Activated CD4-positive, alpha-beta T cell treated with anti-CD3 and anti-CD28 coated beads for 36 hours (primary cell): ENCODE measurements at regions of chr12 and their contacts with region 1.

Region 1: DNA sequence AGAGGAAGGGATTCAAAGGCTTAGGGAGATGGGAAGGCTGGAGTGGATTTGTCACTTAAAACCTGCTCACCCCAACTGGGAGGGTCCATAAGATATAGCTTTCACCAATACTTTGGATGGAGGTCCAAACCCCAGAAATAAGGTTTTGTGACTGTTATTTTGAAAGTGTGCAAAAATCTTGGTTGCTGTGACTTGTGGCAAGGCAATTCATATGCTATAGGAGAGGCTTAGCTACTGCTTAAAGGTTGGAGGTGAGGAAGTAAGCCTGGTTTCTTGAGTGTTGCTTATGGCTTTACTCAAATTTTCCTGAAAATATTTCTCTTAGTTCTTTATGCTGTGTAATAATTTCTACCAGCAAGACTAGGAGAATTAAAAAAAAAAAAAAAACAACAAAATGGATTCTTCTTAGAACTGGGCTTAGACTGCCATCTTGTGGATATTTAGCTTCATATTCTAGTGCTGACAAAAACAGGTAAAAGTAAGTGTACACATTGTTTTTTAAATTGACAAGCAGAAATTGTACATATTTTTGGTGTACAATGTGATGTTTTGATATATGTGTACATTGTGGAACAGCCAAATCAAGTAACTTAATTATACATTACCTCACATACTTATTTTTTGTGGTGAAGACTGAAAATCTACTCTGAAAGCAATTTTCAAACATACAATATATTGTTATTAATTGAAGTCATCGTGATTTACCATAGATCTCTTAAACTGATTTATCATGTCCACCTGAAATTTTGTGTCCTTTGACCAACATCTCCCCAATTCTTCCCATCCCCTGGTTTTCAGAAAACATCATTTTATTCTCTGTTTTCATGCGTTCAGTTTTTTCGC is 23.0 kb downstream of the PDE6H start:
- DNase-seq: no peak
- ATAC-seq: peak; percentile 45
- H3K4me3 Mint-ChIP-seq: no peak overlapping the region
- H3K27ac Mint-ChIP-seq: peak overlapping the region; percentile 76
- H3K4me1 Mint-ChIP-seq: peaks cover 29% of the 10 kb centered on the region
- H3K27me3 Mint-ChIP-seq: no peaks in the 10 kb centered on the region

Region 2: DNA sequence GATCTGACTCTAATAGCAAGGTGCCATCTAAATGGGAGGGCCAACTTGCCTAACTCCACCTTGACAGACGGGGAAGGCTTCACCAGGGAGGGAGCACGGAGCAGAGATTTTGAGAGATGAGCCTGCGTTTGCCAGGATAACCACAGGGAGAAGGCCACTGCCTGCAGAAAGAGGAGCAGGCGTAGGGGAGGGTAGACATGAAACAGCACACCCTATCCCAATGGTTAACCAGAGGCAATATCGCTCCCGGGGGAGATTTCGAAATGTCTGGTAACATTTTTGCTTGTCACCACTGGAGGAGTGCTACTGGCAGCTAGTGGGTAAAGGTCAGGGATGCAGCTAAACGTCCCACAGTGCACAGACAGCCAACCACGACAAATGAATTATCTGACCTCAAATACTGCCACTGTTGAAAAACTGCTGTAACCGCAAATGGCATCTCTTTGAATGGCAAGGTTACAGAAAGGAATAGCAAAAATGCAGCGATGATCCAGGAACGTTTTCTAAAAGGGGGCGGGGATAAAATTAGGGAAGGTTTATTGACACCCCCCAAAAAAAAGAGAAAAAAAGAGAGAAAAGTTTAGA is 756.4 kb before region 1 on chr12:
- CTCF ChIA-PET with region 1: interaction called, 3 read pairs
- POLR2A ChIA-PET with region 1: no interaction called
- intact Hi-C with region 1: loop called in 1 of 2 experiments (anchors 5 kb)
- DNase-seq: peak; percentile 63
- ATAC-seq: peak; percentile 86
- H3K4me3 Mint-ChIP-seq: peak overlapping the region; percentile 62
- H3K27ac Mint-ChIP-seq: peak overlapping the region; percentile 89
- H3K4me1 Mint-ChIP-seq: peaks cover 20% of the 10 kb centered on the region
- H3K27me3 Mint-ChIP-seq: no peaks in the 10 kb centered on the region

Region 3: DNA sequence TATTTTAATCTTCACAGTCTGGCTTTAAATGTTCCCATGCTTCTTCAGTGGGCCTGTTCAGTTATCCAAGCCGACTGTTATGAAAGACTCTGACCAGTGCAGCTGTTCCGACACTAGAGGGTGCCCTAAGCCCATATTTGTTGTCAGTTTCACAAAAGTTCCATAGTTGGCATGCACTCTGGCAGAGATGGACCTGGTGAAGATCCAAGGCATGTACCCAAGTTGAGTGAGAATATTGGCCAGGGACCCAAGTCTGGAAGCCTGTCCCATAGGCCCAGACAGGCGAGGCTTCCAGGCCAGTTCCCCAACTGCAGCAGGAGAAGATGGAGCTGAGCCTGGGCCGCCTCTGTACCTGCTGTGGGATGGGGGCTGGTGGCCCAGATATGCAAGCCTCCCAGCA is 272.0 kb before region 1 on chr12:
- CTCF ChIA-PET with region 1: interaction called, 21 read pairs
- POLR2A ChIA-PET with region 1: no interaction called
- intact Hi-C with region 1: loop called (anchors 1 kb)
- DNase-seq: peak; percentile 72
- ATAC-seq: peak; percentile 80
- H3K4me3 Mint-ChIP-seq: no peak overlapping the region
- H3K27ac Mint-ChIP-seq: no peak overlapping the region
- H3K4me1 Mint-ChIP-seq: no peaks in the 10 kb centered on the region
- H3K27me3 Mint-ChIP-seq: peaks cover 5% of the 10 kb centered on the region

Region 4: DNA sequence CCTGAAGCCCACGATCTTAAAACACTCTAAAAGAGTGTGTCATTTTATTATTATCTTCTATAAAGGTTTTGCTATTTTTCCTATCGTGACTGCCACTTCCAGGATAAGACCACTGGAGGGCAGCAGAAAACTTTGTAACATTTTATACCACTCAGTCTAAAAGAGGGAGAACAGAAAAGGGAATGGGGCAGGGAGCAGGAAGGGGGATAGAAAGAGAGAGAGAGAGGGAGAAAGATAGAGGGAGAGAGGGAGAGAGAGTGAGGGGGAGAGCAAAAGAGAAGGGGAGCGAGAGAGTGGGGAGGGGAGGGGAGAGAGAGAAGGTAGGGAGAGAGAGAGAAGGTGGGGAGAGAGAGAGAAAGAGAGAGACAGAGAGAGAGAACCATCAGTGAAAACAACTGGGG is 150.5 kb before region 1 on chr12:
- CTCF ChIA-PET with region 1: interaction called, 85 read pairs
- POLR2A ChIA-PET with region 1: no interaction called
- intact Hi-C with region 1: loop called (anchors 1 kb)
- DNase-seq: peak; percentile 46
- ATAC-seq: peak; percentile 58
- H3K4me3 Mint-ChIP-seq: no peak overlapping the region
- H3K27ac Mint-ChIP-seq: no peak overlapping the region
- H3K4me1 Mint-ChIP-seq: peaks cover 11% of the 10 kb centered on the region
- H3K27me3 Mint-ChIP-seq: no peaks in the 10 kb centered on the region

Region 5: DNA sequence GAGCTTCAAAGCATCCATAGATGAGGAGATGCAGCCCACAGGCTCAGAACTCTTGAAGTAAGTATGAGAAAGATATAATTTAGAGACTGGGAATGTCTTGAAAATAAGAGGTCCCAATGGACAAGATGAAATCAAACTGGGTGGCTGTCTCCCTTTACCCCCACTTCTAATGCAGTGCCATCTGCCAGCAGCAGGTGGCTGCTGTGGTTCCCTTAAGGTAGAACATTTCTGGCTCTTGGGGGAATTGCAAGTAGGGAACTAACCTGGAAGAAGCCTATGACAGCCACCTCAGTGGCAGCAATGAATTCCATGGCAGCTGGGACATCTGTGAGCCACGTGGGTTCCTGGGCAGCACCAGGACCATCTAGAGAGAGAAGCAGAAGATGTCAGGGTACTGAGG is 58.1 kb before region 1 on chr12:
- CTCF ChIA-PET with region 1: interaction called, 20 read pairs
- POLR2A ChIA-PET with region 1: interaction called, 3 read pairs
- intact Hi-C with region 1: loop called (anchors 2 to 5 kb)
- DNase-seq: peak; percentile 42
- ATAC-seq: peak; percentile 31
- H3K4me3 Mint-ChIP-seq: no peak overlapping the region
- H3K27ac Mint-ChIP-seq: peak overlapping the region; percentile 44
- H3K4me1 Mint-ChIP-seq: peaks cover 30% of the 10 kb centered on the region
- H3K27me3 Mint-ChIP-seq: no peaks in the 10 kb centered on the region

Region 6: GRCh38 chr12:14960548-14961465 is 35.0 kb before region 1 on chr12:
- CTCF ChIA-PET with region 1: interaction called, 6 read pairs
- POLR2A ChIA-PET with region 1: no interaction called
- intact Hi-C with region 1: loop called (anchors 2 kb)
- DNase-seq: peak; percentile 56
- ATAC-seq: peak; percentile 53
- H3K4me3 Mint-ChIP-seq: peak overlapping the region; percentile 96
- H3K27ac Mint-ChIP-seq: peak overlapping the region; percentile 99
- H3K4me1 Mint-ChIP-seq: peaks cover 55% of the 10 kb centered on the region
- H3K27me3 Mint-ChIP-seq: no peaks in the 10 kb centered on the region

Region 7: GRCh38 chr12:14981049-14981448 is 14.8 kb before region 1 on chr12:
- CTCF ChIA-PET with region 1: interaction called, 12 read pairs
- POLR2A ChIA-PET with region 1: no interaction called
- intact Hi-C with region 1: no loop called
- DNase-seq: no peak
- ATAC-seq: no peak
- H3K4me3 Mint-ChIP-seq: no peak overlapping the region
- H3K27ac Mint-ChIP-seq: no peak overlapping the region
- H3K4me1 Mint-ChIP-seq: peaks cover 63% of the 10 kb centered on the region
- H3K27me3 Mint-ChIP-seq: no peaks in the 10 kb centered on the region

Region 8: DNA sequence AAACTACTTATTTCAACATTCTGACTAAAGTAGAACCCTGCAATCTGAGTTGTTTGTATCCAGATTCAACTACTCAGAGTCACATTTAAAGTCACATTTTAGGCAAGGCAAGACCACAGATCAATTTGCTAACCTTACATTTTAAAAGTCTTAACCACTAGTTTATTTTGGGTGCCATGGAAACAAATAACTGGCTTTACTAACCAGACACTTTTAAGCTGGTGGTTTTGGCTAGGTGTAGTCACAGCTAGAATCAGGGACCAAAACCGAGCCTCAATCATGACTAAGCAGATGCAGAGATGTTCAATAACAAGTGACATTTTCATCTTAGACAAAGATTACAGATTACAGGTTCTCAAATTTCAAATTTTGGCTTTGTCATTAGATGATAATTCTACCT is 92.3 kb after region 1 on chr12:
- CTCF ChIA-PET with region 1: no interaction called
- POLR2A ChIA-PET with region 1: no interaction called
- intact Hi-C with region 1: no loop called
- DNase-seq: no peak
- ATAC-seq: peak; percentile 49
- H3K4me3 Mint-ChIP-seq: no peak overlapping the region
- H3K27ac Mint-ChIP-seq: no peak overlapping the region
- H3K4me1 Mint-ChIP-seq: peaks cover 7% of the 10 kb centered on the region
- H3K27me3 Mint-ChIP-seq: peaks cover 2% of the 10 kb centered on the region